GM12878 (cell line): ENCODE measurements at regions of chr9 and their contacts with region 1.

Region 1: DNA sequence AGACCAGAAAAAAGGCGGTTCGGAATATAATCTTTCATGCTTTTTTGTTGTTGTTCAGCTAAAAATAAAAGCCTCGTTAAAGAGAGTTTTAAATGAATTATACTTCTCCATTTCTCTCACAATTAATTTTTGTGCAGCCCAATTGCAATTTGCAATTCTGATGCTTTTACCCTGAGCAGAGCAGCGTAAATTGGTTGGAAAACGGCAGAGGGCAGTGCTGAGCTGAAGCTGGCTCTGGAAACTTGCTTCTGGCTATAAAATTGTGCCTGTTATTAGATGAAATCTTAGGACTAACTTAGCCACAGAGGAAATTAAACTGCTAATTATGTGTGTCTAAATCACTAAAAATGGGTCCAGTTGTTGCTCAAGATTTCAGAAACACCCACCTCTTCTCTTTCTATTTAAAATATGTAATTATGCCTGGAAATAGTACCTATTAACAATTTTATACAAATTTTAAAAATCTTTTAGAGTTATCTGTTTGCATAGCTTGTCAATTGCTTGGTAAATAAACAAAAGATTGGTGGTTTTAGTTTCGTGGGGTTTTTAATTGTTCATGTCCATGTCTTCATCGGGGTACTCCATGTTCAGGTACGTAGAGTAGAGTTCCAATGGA is 441.8 kb upstream of the TLE4 start:
- DNase-seq: no peak
- ATAC-seq: no peak
- H3K4me3 ChIP-seq: no peak overlapping the region
- H3K27ac ChIP-seq: no peak overlapping the region
- H3K4me1 ChIP-seq: no peaks in the 10 kb centered on the region
- H3K27me3 ChIP-seq: no peaks in the 10 kb centered on the region
- CTCF ChIP-seq: peak; percentile 46 to 49 (median 47); a peak in 5 of 6 replicates
- EP300 ChIP-seq: no peak
- POLR2A ChIP-seq: no peak
- RAD21 ChIP-seq: peak; percentile 53

Region 2: GRCh38 chr9:78820855-78821822 is 308.8 kb before region 1 on chr9:
- CTCF ChIA-PET with region 1: no interaction called
- POLR2A ChIA-PET with region 1: no interaction called
- RAD21 ChIA-PET with region 1: no interaction called
- SMC1A ChIA-PET with region 1: no interaction called
- in situ Hi-C with region 1: no loop called
- intact Hi-C with region 1: loop called (anchors 10 kb)
- DNase-seq: no peak
- ATAC-seq: peak; percentile 78
- H3K4me3 ChIP-seq: no peak overlapping the region
- H3K27ac ChIP-seq: no peak overlapping the region
- H3K4me1 ChIP-seq: no peaks in the 10 kb centered on the region
- H3K27me3 ChIP-seq: no peaks in the 10 kb centered on the region
- CTCF ChIP-seq: peak; percentile 46 to 67 (median 50); a peak in 5 of 6 replicates
- EP300 ChIP-seq: no peak
- POLR2A ChIP-seq: no peak
- RAD21 ChIP-seq: peak; percentile 53

Region 3: GRCh38 chr9:79565245-79565644 is 435.3 kb after region 1 on chr9:
- CTCF ChIA-PET with region 1: interaction called, 5 read pairs
- POLR2A ChIA-PET with region 1: no interaction called
- RAD21 ChIA-PET with region 1: no interaction called
- SMC1A ChIA-PET with region 1: interaction called, 5 read pairs
- in situ Hi-C with region 1: no loop called
- intact Hi-C with region 1: loop called (anchors 10 kb)
- DNase-seq: peak; percentile 42
- ATAC-seq: peak; percentile 82
- H3K4me3 ChIP-seq: no peak overlapping the region
- H3K27ac ChIP-seq: no peak overlapping the region
- H3K4me1 ChIP-seq: peaks cover 23% of the 10 kb centered on the region
- H3K27me3 ChIP-seq: no peaks in the 10 kb centered on the region
- CTCF ChIP-seq: no peak
- EP300 ChIP-seq: 0 out of 4 replicates have a peak, but pooled peaks of 1 of the 2 experiments have one; percentile 19
- POLR2A ChIP-seq: no peak
- RAD21 ChIP-seq: no peak

Region 4: DNA sequence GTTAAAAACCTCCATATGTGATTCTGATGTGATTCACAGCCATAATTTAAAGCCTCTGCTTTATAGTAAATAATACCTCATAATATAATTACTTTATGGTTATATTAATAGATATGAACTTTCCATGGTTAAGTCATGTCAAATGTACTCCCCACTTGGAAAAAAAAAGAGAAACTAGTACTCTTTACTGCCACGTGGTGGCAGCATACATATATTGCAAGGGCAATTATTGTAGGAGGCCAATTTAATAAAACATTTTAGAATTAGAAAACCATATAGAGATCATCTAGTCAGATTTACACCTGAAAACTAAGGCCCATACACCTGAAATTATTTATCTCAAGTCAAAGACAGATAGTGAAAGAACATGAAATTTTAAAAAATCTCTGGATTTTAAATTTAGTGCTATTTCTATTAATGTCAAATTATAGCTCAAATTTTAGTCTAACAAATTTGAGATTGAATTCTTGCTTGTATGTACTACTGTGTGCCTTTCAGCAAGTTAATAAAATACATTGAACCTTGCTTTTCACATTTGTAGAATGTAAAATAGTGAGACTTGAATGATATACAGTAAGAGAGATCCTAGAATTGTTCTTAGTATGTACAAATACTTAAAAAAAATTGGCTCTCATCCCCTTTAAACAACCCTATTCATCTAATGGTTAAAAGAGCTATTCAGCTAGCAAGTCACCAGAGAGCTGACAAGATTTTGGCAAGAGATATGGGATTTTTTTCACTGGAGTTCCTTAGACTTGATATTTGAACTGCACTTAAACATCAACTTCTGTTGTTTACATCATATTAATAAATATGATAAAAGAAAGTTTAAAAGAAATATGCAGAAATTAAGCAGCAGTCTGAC is 1045.5 kb after region 1 on chr9:
- CTCF ChIA-PET with region 1: no interaction called
- POLR2A ChIA-PET with region 1: no interaction called
- RAD21 ChIA-PET with region 1: no interaction called
- SMC1A ChIA-PET with region 1: no interaction called
- in situ Hi-C with region 1: no loop called
- intact Hi-C with region 1: loop called (anchors 10 kb)
- DNase-seq: no peak
- ATAC-seq: 0 out of 3 replicates have a peak, but pooled peaks have one; percentile 33
- H3K4me3 ChIP-seq: no peak overlapping the region
- H3K27ac ChIP-seq: no peak overlapping the region
- H3K4me1 ChIP-seq: no peaks in the 10 kb centered on the region
- H3K27me3 ChIP-seq: no peaks in the 10 kb centered on the region
- CTCF ChIP-seq: peak; percentile 50 to 59 (median 56); a peak in 5 of 6 replicates
- EP300 ChIP-seq: no peak
- POLR2A ChIP-seq: no peak
- RAD21 ChIP-seq: peak; percentile 68